Sciatic nerve (tissue), 2 donors: ENCODE measurements at regions of chr11 and their contacts with region 1.

Region 1: GRCh38 chr11:15208378-15209222 is 93.9 kb downstream of the INSC start:
- DNase-seq: peak; percentile 87
- ATAC-seq: peak; percentile 81

Region 2: DNA sequence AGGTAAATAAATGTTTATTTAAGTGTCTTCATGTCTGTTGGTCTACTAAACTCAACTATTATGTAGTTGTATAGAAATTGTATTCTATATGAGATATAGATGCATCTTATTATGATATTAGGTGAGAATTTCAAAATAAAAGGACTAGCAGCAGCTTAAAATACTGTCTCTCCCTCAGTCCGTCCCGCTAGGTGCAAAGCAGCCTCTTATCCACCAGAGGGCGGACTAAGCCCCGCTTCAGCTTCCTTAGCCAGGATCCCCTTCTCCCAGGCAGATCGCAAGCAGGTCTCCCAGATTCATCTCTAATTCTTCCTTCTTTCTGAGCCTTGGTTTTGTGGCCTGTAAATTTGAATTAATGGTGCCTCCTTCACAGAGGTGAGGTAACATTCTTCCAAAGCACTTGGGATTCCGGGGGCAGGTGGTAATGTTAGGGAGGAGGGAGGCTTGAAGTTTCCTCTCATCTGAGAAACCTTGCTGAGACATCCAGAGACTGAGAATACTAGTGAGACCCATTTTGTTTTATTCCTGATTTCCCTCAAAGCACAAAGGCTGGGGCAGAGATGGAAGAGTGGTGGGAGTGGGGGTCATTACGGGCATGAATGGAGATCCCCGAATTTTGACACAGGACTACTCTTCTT is 107.4 kb before region 1 on chr11:
- intact Hi-C with region 1: loop called (anchors 5 kb)
- DNase-seq: peak; percentile 80
- ATAC-seq: peak; percentile 78